Activated CD4-positive, alpha-beta T cell treated with anti-CD3 and anti-CD28 coated beads, Interleukin-2, amount 10 ng/mL, durations not matched to agents 24 days and 14 days (primary cell): ENCODE measurements at regions of chr4 and their contacts with region 1.

Region 1: GRCh38 chr4:39044364-39044955 is 12.3 kb upstream of the TMEM156 start:
- DNase-seq: peak; percentile 99
- H3K4me3 Mint-ChIP-seq: peak overlapping the region; percentile 89
- H3K27ac Mint-ChIP-seq: peak overlapping the region; percentile 90
- H3K4me1 Mint-ChIP-seq: peaks cover 50% of the 10 kb centered on the region
- H3K27me3 Mint-ChIP-seq: no peaks in the 10 kb centered on the region

Region 2: GRCh38 chr4:38902695-38903094 is 141.8 kb before region 1 on chr4:
- intact Hi-C with region 1: no loop called
- DNase-seq: no peak
- H3K4me3 Mint-ChIP-seq: no peak overlapping the region
- H3K27ac Mint-ChIP-seq: no peak overlapping the region
- H3K4me1 Mint-ChIP-seq: peaks cover 15% of the 10 kb centered on the region
- H3K27me3 Mint-ChIP-seq: no peaks in the 10 kb centered on the region

Region 3: GRCh38 chr4:38939165-38939564 is 105.3 kb before region 1 on chr4:
- intact Hi-C with region 1: loop called (anchors 2 kb)
- DNase-seq: no peak
- H3K4me3 Mint-ChIP-seq: no peak overlapping the region
- H3K27ac Mint-ChIP-seq: peak overlapping the region; percentile 51
- H3K4me1 Mint-ChIP-seq: peaks cover 36% of the 10 kb centered on the region
- H3K27me3 Mint-ChIP-seq: no peaks in the 10 kb centered on the region

Region 4: GRCh38 chr4:38958453-38959190 is 85.8 kb before region 1 on chr4:
- intact Hi-C with region 1: loop called (anchors 2 kb)
- DNase-seq: no peak
- H3K4me3 Mint-ChIP-seq: peak overlapping the region; percentile 56
- H3K27ac Mint-ChIP-seq: peak overlapping the region; percentile 97
- H3K4me1 Mint-ChIP-seq: peaks cover 41% of the 10 kb centered on the region
- H3K27me3 Mint-ChIP-seq: no peaks in the 10 kb centered on the region

Region 5: GRCh38 chr4:38980903-38981676 is 63.4 kb before region 1 on chr4:
- intact Hi-C with region 1: loop called (anchors 1 kb)
- DNase-seq: peak; percentile 73
- H3K4me3 Mint-ChIP-seq: peak overlapping the region; percentile 69
- H3K27ac Mint-ChIP-seq: peak overlapping the region; percentile 87
- H3K4me1 Mint-ChIP-seq: peaks cover 55% of the 10 kb centered on the region
- H3K27me3 Mint-ChIP-seq: no peaks in the 10 kb centered on the region

Region 6: GRCh38 chr4:38987491-38987890 is 57.0 kb before region 1 on chr4:
- intact Hi-C with region 1: loop called (anchors 1 kb)
- DNase-seq: no peak
- H3K4me3 Mint-ChIP-seq: peak overlapping the region; percentile 43
- H3K27ac Mint-ChIP-seq: peak overlapping the region; percentile 82
- H3K4me1 Mint-ChIP-seq: peaks cover 61% of the 10 kb centered on the region
- H3K27me3 Mint-ChIP-seq: no peaks in the 10 kb centered on the region

Region 7: DNA sequence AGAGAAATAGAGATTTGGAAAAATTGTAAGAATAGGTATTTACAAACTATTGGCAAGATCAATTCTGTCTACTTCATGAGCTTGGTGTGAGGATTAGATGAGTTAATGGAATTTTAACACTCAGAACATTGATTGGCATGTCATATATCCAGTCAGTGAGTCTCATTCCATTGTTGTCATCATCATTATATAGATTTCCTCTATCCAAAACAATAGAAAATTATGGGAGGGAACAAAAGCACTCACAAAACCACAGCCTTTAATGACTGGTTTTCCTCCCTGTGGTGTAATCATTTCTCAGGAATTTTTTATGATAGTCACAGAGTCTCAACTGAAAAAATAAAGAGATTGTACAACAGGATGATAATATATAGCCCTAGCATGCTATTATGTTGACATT is 38.7 kb after region 1 on chr4:
- intact Hi-C with region 1: loop called (anchors 5 kb)
- DNase-seq: no peak
- H3K4me3 Mint-ChIP-seq: no peak overlapping the region
- H3K27ac Mint-ChIP-seq: no peak overlapping the region
- H3K4me1 Mint-ChIP-seq: peaks cover 3% of the 10 kb centered on the region
- H3K27me3 Mint-ChIP-seq: no peaks in the 10 kb centered on the region

Region 8: GRCh38 chr4:39134683-39135319 is 90.3 kb after region 1 on chr4:
- intact Hi-C with region 1: loop called (anchors 2 kb)
- DNase-seq: no peak
- H3K4me3 Mint-ChIP-seq: no peak overlapping the region
- H3K27ac Mint-ChIP-seq: peak overlapping the region; percentile 36
- H3K4me1 Mint-ChIP-seq: peaks cover 13% of the 10 kb centered on the region
- H3K27me3 Mint-ChIP-seq: no peaks in the 10 kb centered on the region